CD4-positive, alpha-beta T cell (primary cell): ENCODE measurements at regions of chr1 and their contacts with region 1.

Region 1: GRCh38 chr1:22052115-22053016 is at the start of gene CDC42:
- DNase-seq: peak; percentile 96 to 99 (median 97)
- ATAC-seq: peak; percentile 88
- H3K4me3 ChIP-seq: peak within 1 kb of the TSS; percentile 88
- H3K4me3 Mint-ChIP-seq: peak within 1 kb of the TSS; percentile 99
- H3K27ac ChIP-seq: peak within 1 kb of the TSS; percentile 96 to 97
- H3K27ac Mint-ChIP-seq: peak within 1 kb of the TSS; percentile 98
- H3K4me1 ChIP-seq: peaks cover 50% of the 10 kb centered on the region
- H3K4me1 Mint-ChIP-seq: peaks cover 70% of the 10 kb centered on the region
- H3K27me3 ChIP-seq: no peaks in the 10 kb centered on the region
- H3K27me3 Mint-ChIP-seq: no peaks in the 10 kb centered on the region
- CTCF ChIP-seq: no peak
- total RNA-seq, gene CDC42: 375 to 379 TPM

Region 2: GRCh38 chr1:21050031-21050430 is 1002.3 kb before region 1 on chr1:
- CTCF ChIA-PET with region 1: no interaction called
- POLR2A ChIA-PET with region 1: no interaction called
- intact Hi-C with region 1: no loop called
- DNase-seq: no peak
- ATAC-seq: no peak
- H3K4me3 ChIP-seq: no peak overlapping the region
- H3K4me3 Mint-ChIP-seq: no peak overlapping the region
- H3K27ac ChIP-seq: no peak overlapping the region
- H3K27ac Mint-ChIP-seq: no peak overlapping the region
- H3K4me1 ChIP-seq: no peaks in the 10 kb centered on the region
- H3K4me1 Mint-ChIP-seq: no peaks in the 10 kb centered on the region
- H3K27me3 ChIP-seq: no peaks in the 10 kb centered on the region
- H3K27me3 Mint-ChIP-seq: no peaks in the 10 kb centered on the region
- CTCF ChIP-seq: no peak

Region 3: DNA sequence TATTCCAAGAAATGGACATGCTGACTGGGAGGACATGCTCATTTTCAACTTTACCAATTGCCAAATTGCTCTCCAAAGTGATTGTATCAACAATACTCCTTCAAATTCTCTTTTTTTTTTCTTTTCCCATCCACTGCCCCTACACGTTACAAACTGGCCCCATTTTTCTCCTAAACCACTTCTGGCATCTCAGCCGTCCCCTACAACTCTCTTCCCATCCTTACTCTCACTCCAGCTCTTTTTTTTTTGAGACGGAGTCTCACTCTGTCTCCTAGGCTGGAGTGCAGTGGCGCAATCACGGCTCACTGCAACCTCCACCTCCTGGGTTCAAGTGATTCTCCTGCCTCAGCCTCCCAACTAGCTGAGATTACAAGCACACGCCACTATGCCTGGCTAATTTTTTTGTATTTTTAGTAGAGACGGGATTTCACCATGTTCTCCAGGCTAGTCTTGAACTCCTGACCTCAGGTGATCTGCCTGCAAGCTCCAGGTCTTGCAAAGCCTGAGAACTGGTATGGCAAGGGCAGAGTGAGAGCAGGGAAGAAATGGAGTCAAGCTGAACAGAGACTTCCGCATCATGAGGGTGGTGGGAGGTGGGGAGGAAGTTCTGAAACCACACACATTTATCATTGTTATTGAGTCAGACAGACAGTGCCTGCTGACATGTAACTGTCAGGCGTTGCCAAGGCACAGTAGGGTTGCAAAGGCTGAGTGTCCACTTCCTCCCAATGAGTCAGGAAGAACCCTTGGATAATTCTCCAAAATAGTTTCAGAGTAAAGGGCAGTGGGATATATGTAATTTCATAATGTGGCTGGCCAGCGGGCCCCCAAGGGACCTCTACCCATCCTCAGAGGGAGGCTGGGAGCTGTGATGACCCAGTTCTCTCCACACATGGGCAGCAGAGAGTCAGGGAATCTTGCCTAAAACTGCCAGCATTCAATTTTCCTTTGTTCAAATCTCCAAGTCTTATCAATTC is 33.5 kb before region 1 on chr1:
- CTCF ChIA-PET with region 1: interaction called, 64 read pairs
- POLR2A ChIA-PET with region 1: interaction called, 618 read pairs
- intact Hi-C with region 1: no loop called
- DNase-seq: peak; percentile 41 to 91 (median 58)
- ATAC-seq: peak; percentile 95
- H3K4me3 ChIP-seq: no peak overlapping the region
- H3K4me3 Mint-ChIP-seq: peak overlapping the region; percentile 57
- H3K27ac ChIP-seq: peak overlapping the region in 1 of 2 donors; percentile 65
- H3K27ac Mint-ChIP-seq: peak overlapping the region; percentile 89
- H3K4me1 ChIP-seq: peaks cover 43% of the 10 kb centered on the region
- H3K4me1 Mint-ChIP-seq: peaks cover 25% of the 10 kb centered on the region
- H3K27me3 ChIP-seq: no peaks in the 10 kb centered on the region
- H3K27me3 Mint-ChIP-seq: no peaks in the 10 kb centered on the region
- CTCF ChIP-seq: peak; percentile 35

Region 4: GRCh38 chr1:22031214-22031962 is 21.0 kb before region 1 on chr1:
- CTCF ChIA-PET with region 1: interaction called, 64 read pairs
- POLR2A ChIA-PET with region 1: interaction called, 618 read pairs
- intact Hi-C with region 1: no loop called
- DNase-seq: peak; percentile 28 to 68 (median 52)
- ATAC-seq: peak; percentile 95
- H3K4me3 ChIP-seq: peak overlapping the region; percentile 25
- H3K4me3 Mint-ChIP-seq: peak overlapping the region; percentile 60
- H3K27ac ChIP-seq: peak overlapping the region; percentile 21 to 26
- H3K27ac Mint-ChIP-seq: peak overlapping the region; percentile 90
- H3K4me1 ChIP-seq: peaks cover 44% of the 10 kb centered on the region
- H3K4me1 Mint-ChIP-seq: peaks cover 55% of the 10 kb centered on the region
- H3K27me3 ChIP-seq: no peaks in the 10 kb centered on the region
- H3K27me3 Mint-ChIP-seq: no peaks in the 10 kb centered on the region
- CTCF ChIP-seq: no peak

Region 5: GRCh38 chr1:22039594-22040285 is 12.6 kb before region 1 on chr1:
- CTCF ChIA-PET with region 1: interaction called, 19 read pairs
- POLR2A ChIA-PET with region 1: interaction called, 331 read pairs
- intact Hi-C with region 1: loop called (anchors 1 kb)
- DNase-seq: peak; percentile 79 to 98 (median 87)
- ATAC-seq: peak; percentile 92
- H3K4me3 ChIP-seq: peak overlapping the region; percentile 44
- H3K4me3 Mint-ChIP-seq: peak overlapping the region; percentile 59
- H3K27ac ChIP-seq: peak overlapping the region; percentile 95 to 97
- H3K27ac Mint-ChIP-seq: peak overlapping the region; percentile 99
- H3K4me1 ChIP-seq: peaks cover 82% of the 10 kb centered on the region
- H3K4me1 Mint-ChIP-seq: peaks cover 60% of the 10 kb centered on the region
- H3K27me3 ChIP-seq: no peaks in the 10 kb centered on the region
- H3K27me3 Mint-ChIP-seq: no peaks in the 10 kb centered on the region
- CTCF ChIP-seq: no peak

Region 6: GRCh38 chr1:22064751-22065402 is 12.5 kb after region 1 on chr1:
- CTCF ChIA-PET with region 1: interaction called, 3 read pairs
- POLR2A ChIA-PET with region 1: interaction called, 20 read pairs
- intact Hi-C with region 1: no loop called
- DNase-seq: no peak
- ATAC-seq: no peak
- H3K4me3 ChIP-seq: no peak overlapping the region
- H3K4me3 Mint-ChIP-seq: peak overlapping the region; percentile 61
- H3K27ac ChIP-seq: no peak overlapping the region
- H3K27ac Mint-ChIP-seq: peak overlapping the region; percentile 55
- H3K4me1 ChIP-seq: peaks cover 79% of the 10 kb centered on the region
- H3K4me1 Mint-ChIP-seq: peaks cover 87% of the 10 kb centered on the region
- H3K27me3 ChIP-seq: no peaks in the 10 kb centered on the region
- H3K27me3 Mint-ChIP-seq: no peaks in the 10 kb centered on the region
- CTCF ChIP-seq: no peak

Region 7: GRCh38 chr1:22089787-22090186 is 37.4 kb after region 1 on chr1:
- CTCF ChIA-PET with region 1: interaction called, 9 read pairs
- POLR2A ChIA-PET with region 1: interaction called, 14 read pairs
- intact Hi-C with region 1: loop called in 1 of 2 experiments (anchors 5 kb)
- DNase-seq: peak in 2 of 14 experiments; percentile 17 to 30
- ATAC-seq: no peak
- H3K4me3 ChIP-seq: peak overlapping the region; percentile 24
- H3K4me3 Mint-ChIP-seq: peak overlapping the region; percentile 74
- H3K27ac ChIP-seq: peak overlapping the region; percentile 3 to 25
- H3K27ac Mint-ChIP-seq: peak overlapping the region; percentile 81
- H3K4me1 ChIP-seq: peaks cover 35% of the 10 kb centered on the region
- H3K4me1 Mint-ChIP-seq: peaks cover 94% of the 10 kb centered on the region
- H3K27me3 ChIP-seq: no peaks in the 10 kb centered on the region
- H3K27me3 Mint-ChIP-seq: no peaks in the 10 kb centered on the region
- CTCF ChIP-seq: no peak

Region 8: DNA sequence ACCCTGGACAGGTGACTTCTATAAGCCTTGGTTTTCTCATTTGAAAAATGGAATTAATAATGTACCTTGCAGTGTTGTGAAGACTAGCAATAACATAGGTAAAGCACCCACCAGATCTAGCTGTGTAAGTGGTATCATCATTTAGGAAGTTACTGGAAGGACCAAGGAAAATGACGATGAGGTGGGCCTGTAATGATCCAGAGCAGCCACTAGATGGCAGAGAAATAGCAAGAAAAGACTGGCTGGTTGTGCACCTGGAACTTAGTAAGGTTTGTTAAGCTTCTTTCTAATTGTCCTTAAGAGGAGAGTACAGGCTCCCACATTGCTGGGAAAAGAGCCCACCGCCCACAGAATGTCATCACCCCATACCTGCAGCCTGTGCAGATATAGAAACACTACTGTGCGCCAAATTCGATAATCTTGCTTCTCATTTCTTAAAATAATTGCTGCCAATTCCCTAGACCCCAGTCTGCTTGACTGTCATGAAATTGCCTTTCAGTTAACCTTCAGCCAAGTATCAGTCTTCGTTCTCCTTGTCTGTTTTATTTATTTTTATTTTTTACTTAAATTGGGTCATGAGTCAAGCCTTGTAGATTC is 53.3 kb after region 1 on chr1:
- CTCF ChIA-PET with region 1: interaction called, 8 read pairs
- POLR2A ChIA-PET with region 1: interaction called, 11 read pairs
- intact Hi-C with region 1: loop called in 1 of 2 experiments (anchors 5 kb)
- DNase-seq: peak in 5 of 14 experiments; percentile 16 to 72 (median 61)
- ATAC-seq: peak; percentile 68
- H3K4me3 ChIP-seq: no peak overlapping the region
- H3K4me3 Mint-ChIP-seq: peak overlapping the region; percentile 64
- H3K27ac ChIP-seq: peak overlapping the region in 1 of 2 donors; percentile 8
- H3K27ac Mint-ChIP-seq: peak overlapping the region; percentile 77
- H3K4me1 ChIP-seq: peaks cover 43% of the 10 kb centered on the region
- H3K4me1 Mint-ChIP-seq: peaks cover 74% of the 10 kb centered on the region
- H3K27me3 ChIP-seq: no peaks in the 10 kb centered on the region
- H3K27me3 Mint-ChIP-seq: no peaks in the 10 kb centered on the region
- CTCF ChIP-seq: peak; percentile 85

Region 9: GRCh38 chr1:22184892-22185612 is 132.7 kb after region 1 on chr1:
- CTCF ChIA-PET with region 1: no interaction called
- POLR2A ChIA-PET with region 1: no interaction called
- intact Hi-C with region 1: no loop called
- DNase-seq: peak in 1 of 14 experiments; percentile 5
- ATAC-seq: no peak
- H3K4me3 ChIP-seq: no peak overlapping the region
- H3K4me3 Mint-ChIP-seq: no peak overlapping the region
- H3K27ac ChIP-seq: no peak overlapping the region
- H3K27ac Mint-ChIP-seq: no peak overlapping the region
- H3K4me1 ChIP-seq: no peaks in the 10 kb centered on the region
- H3K4me1 Mint-ChIP-seq: no peaks in the 10 kb centered on the region
- H3K27me3 ChIP-seq: peaks cover 4 to 11% of the 10 kb centered on the region in 2 experiments
- H3K27me3 Mint-ChIP-seq: peaks cover 43% of the 10 kb centered on the region
- CTCF ChIP-seq: no peak